ENCODE measurements at regions of chr10 and their contacts with region 1.

Region 1: DNA sequence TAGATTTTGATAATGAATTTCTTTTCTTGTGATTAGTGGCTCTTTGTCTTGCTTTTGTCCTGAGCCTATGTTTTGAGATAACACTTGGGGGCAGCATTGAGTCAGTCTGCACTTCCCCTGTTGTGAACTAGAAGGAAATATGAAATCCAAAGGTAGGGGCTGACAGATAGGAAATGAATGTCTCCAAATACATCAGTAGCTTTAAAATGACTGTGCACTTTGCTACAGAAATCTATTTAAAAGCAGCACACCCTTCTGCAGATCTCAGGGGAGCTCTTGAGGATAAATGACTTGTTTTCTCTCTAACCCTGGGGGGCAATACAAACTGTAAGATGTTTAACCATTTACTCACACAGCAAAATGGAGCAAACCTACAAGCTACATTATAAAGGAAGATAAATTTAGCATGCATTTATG is 176.0 kb upstream of the MYO3A start:
- DNase-seq: peak; percentile 61
- H3K4me3 ChIP-seq: no peak overlapping the region; a peak in 1 of 4 replicates
- H3K27ac ChIP-seq: no peak overlapping the region
- H3K4me1 ChIP-seq: no peaks in the 10 kb centered on the region
- H3K27me3 ChIP-seq: no peaks in the 10 kb centered on the region
- CTCF ChIP-seq: peak; percentile 54
- EP300 ChIP-seq: no peak
- RAD21 ChIP-seq: peak; percentile 74

Region 2: GRCh38 chr10:25747084-25747483 is 11.0 kb before region 1 on chr10:
- CTCF ChIA-PET with region 1: interaction called, 20 read pairs
- POLR2A ChIA-PET with region 1: no interaction called
- DNase-seq: no peak
- H3K4me3 ChIP-seq: no peak overlapping the region
- H3K27ac ChIP-seq: no peak overlapping the region
- H3K4me1 ChIP-seq: no peaks in the 10 kb centered on the region; a peak in 1 of 4 replicates
- H3K27me3 ChIP-seq: no peaks in the 10 kb centered on the region
- CTCF ChIP-seq: no peak
- EP300 ChIP-seq: no peak
- RAD21 ChIP-seq: no peak

Region 3: GRCh38 chr10:25797888-25798429 is 39.9 kb after region 1 on chr10:
- CTCF ChIA-PET with region 1: no interaction called
- POLR2A ChIA-PET with region 1: no interaction called
- DNase-seq: no peak
- H3K4me3 ChIP-seq: no peak overlapping the region
- H3K27ac ChIP-seq: no peak overlapping the region
- H3K4me1 ChIP-seq: no peaks in the 10 kb centered on the region
- H3K27me3 ChIP-seq: no peaks in the 10 kb centered on the region
- CTCF ChIP-seq: no peak
- EP300 ChIP-seq: no peak
- RAD21 ChIP-seq: no peak